Activated naive CD4-positive, alpha-beta T cell treated with anti-CD3 and anti-CD28 coated beads for 36 hours (primary cell): ENCODE measurements at regions of chr3 and their contacts with region 1.

Region 1: DNA sequence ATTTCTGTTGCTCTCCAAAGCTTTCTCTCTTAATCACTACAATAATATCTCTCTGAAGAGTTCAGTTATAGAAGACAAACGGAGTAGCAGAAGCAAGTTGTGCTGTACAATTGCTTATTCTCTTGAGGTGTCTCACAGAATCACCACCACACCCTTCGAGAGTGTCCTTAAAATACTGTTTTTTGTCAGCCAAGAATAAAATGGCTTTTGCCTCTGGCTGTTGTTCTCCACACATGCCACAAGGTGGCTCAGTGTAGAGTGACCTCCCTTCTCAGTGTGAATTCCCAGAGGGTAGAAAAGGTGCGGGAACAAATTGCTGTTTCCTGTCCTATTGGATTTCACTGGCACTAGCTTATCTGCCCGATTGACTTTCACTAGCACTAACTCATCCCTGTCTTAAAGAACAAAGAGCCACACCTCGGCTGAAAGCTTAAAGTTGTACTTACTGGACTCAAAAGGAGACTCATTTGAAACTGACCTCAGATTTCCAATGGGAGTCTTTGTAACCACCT is 134.2 kb upstream of the SATB1 start:
- DNase-seq: peak; percentile 47
- H3K4me3 Mint-ChIP-seq: peak overlapping the region; percentile 39
- H3K27ac Mint-ChIP-seq: peak overlapping the region; percentile 88
- H3K4me1 Mint-ChIP-seq: peaks cover 66% of the 10 kb centered on the region
- H3K27me3 Mint-ChIP-seq: no peaks in the 10 kb centered on the region

Region 2: GRCh38 chr3:17151598-17152373 is 1407.6 kb before region 1 on chr3:
- CTCF ChIA-PET with region 1: no interaction called
- intact Hi-C with region 1: loop called (anchors 5 kb)
- DNase-seq: peak; percentile 95
- H3K4me3 Mint-ChIP-seq: peak overlapping the region; percentile 28
- H3K27ac Mint-ChIP-seq: peak overlapping the region; percentile 85
- H3K4me1 Mint-ChIP-seq: peaks cover 25% of the 10 kb centered on the region
- H3K27me3 Mint-ChIP-seq: no peaks in the 10 kb centered on the region

Region 3: DNA sequence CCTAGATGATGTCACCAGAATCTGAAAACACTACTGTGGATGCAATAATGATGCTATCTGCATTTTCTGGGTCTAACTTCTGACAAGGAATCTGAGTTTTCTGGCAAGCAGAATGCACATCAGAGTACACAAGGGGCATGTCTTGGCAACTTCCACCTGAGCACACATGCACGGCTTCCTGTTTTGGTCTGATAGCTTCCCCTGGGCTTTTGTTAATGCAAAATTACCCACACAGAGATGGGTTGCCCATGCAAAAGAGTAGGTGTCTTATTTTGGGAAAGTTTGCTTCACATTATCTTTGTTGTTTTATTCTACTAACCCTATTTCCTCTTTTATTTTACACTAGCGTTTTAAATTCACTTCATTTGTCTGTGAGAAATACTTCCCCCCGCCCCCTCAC is 60.1 kb before region 1 on chr3:
- CTCF ChIA-PET with region 1: no interaction called
- intact Hi-C with region 1: loop called (anchors 1 kb)
- DNase-seq: peak; percentile 42
- H3K4me3 Mint-ChIP-seq: peak overlapping the region; percentile 46
- H3K27ac Mint-ChIP-seq: peak overlapping the region; percentile 83
- H3K4me1 Mint-ChIP-seq: peaks cover 41% of the 10 kb centered on the region
- H3K27me3 Mint-ChIP-seq: no peaks in the 10 kb centered on the region

Region 4: GRCh38 chr3:18679238-18679637 is 119.9 kb after region 1 on chr3:
- CTCF ChIA-PET with region 1: interaction called, 7 read pairs
- intact Hi-C with region 1: loop called (anchors 1 kb)
- DNase-seq: peak; percentile 77
- H3K4me3 Mint-ChIP-seq: peak overlapping the region; percentile 31
- H3K27ac Mint-ChIP-seq: peak overlapping the region; percentile 81
- H3K4me1 Mint-ChIP-seq: peaks cover 81% of the 10 kb centered on the region
- H3K27me3 Mint-ChIP-seq: no peaks in the 10 kb centered on the region

Region 5: GRCh38 chr3:18758047-18758704 is 198.8 kb after region 1 on chr3:
- CTCF ChIA-PET with region 1: interaction called, 27 read pairs
- intact Hi-C with region 1: loop called (anchors 1 kb)
- DNase-seq: peak; percentile 38
- H3K4me3 Mint-ChIP-seq: no peak overlapping the region
- H3K27ac Mint-ChIP-seq: peak overlapping the region; percentile 57
- H3K4me1 Mint-ChIP-seq: peaks cover 43% of the 10 kb centered on the region
- H3K27me3 Mint-ChIP-seq: no peaks in the 10 kb centered on the region

Region 6: DNA sequence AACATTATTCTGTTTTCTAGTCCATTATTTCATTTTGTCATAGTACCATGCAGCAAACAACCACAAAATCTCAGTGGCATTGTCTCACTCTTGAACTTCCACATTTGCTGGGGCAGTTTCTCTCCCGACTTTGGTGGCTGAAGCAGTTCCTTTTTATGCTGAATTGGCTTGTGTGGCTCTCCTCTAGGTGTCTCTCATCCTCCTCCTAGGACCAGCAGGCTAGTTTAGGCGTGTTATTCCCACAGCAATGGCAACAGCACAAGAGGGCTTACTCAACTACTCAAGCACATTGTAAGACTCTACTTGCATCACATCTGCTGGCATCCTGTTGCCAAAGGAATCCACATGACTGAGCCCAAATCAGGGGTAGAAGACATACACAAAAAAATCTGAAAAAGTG is 387.1 kb after region 1 on chr3:
- CTCF ChIA-PET with region 1: no interaction called
- intact Hi-C with region 1: no loop called
- DNase-seq: no peak
- H3K4me3 Mint-ChIP-seq: no peak overlapping the region
- H3K27ac Mint-ChIP-seq: no peak overlapping the region
- H3K4me1 Mint-ChIP-seq: no peaks in the 10 kb centered on the region
- H3K27me3 Mint-ChIP-seq: peaks cover 6% of the 10 kb centered on the region